Activated CD8-positive, alpha-beta T cell treated with anti-CD3 and anti-CD28 coated beads, Interleukin-2, amount 10 ng/mL, durations not matched to agents 7 days and 5 days (primary cell): ENCODE measurements at regions of chr1 and their contacts with region 1.

Region 1: DNA sequence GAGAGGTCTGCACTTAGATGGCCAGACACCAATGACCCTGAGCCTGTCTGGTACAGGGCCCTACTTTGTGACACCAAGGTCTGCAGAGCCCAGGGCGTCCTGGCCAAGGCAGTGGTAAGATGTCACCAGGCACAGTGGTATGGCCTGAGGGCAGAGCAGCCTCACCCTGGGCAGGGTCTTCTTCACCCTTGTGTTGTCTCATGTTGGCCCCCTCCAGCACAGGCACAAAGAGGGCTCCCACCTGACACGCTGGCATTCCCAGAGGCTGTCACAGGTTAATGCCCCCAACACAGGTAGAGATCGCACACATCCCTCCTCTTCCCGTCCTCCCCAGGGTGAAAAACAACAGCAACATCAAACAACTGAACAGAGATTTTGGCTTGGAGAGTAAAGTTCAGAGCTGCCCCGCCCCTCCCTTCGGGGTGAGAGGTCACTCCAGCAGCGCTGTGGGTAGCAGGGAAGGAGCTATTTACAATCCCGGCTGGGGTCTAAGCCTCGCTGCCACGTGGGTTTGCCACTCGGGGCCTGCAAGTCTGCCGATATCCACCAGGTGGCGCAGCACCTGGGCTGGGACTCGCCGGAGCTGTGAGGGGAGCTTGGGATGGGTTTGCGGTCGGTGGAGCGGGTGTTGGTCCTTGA is 12.6 kb downstream of the EFNA3 start:
- DNase-seq: peak; percentile 85
- ATAC-seq: peak; percentile 84
- H3K4me3 Mint-ChIP-seq: no peak overlapping the region
- H3K27ac Mint-ChIP-seq: no peak overlapping the region
- H3K4me1 Mint-ChIP-seq: peaks cover 9% of the 10 kb centered on the region
- H3K27me3 Mint-ChIP-seq: peaks cover 16% of the 10 kb centered on the region

Region 2: DNA sequence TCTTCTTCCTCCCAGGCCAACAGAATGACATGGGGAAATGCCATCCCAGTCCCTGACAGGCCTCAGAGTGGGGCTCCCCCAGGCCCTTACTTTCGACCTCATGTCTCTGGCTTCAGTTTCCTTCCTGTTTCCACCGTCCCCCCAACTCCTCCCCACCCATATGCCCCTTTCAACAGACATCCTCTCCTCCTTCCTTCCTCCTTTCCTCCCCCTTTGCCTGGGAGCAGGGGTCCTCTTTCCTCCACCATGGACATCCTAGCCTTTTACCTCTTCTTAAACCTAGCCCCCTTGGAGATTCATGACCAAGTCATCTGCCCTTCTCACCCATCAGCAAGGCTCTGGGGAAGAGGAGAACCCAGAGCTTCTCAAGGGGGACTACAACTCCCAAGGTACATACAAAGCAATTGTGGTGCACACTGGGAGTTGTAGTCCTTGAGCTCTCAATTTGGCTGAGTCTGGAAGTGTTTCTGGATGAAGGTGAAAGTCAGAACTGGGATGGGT is 84.5 kb before region 1 on chr1:
- CTCF ChIA-PET with region 1: no interaction called
- POLR2A ChIA-PET with region 1: no interaction called
- DNase-seq: peak; percentile 67
- ATAC-seq: peak; percentile 45
- H3K4me3 Mint-ChIP-seq: peak overlapping the region; percentile 63
- H3K27ac Mint-ChIP-seq: peak overlapping the region; percentile 95
- H3K4me1 Mint-ChIP-seq: peaks cover 72% of the 10 kb centered on the region
- H3K27me3 Mint-ChIP-seq: no peaks in the 10 kb centered on the region

Region 3: DNA sequence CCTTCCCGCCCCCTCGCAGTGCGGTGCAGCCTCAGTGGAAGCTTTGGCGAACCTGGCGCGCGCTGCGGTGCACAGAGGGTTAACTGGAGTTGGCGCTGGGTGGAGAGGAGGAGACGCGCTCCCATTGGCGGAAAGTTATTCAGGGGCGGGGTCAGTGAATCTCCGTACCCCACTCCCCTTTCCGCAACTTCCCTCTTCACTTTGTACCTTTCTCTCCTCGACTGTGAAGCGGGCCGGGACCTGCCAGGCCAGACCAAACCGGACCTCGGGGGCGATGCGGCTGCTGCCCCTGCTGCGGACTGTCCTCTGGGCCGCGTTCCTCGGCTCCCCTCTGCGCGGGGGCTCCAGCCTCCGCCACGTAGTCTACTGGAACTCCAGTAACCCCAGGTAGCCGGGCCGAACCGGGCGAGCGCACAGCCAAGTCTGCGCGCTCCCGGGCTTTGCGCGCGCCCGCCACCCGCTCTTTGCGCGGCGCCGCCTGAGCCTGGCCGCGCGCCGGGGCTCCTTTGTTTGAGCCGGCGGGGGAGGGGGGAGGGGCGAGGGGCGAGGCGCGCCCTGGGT is 27.6 kb before region 1 on chr1 and contains the start of gene EFNA4:
- CTCF ChIA-PET with region 1: interaction called, 201 read pairs
- POLR2A ChIA-PET with region 1: interaction called, 3 read pairs
- DNase-seq: peak; percentile 90
- ATAC-seq: peak; percentile 85
- H3K4me3 Mint-ChIP-seq: peak within 1 kb of the TSS; percentile 89
- H3K27ac Mint-ChIP-seq: peak within 1 kb of the TSS; percentile 51
- H3K4me1 Mint-ChIP-seq: peaks cover 41% of the 10 kb centered on the region
- H3K27me3 Mint-ChIP-seq: no peaks in the 10 kb centered on the region
- total RNA-seq, gene EFNA4: 7.8 to 9.7 TPM

Region 4: DNA sequence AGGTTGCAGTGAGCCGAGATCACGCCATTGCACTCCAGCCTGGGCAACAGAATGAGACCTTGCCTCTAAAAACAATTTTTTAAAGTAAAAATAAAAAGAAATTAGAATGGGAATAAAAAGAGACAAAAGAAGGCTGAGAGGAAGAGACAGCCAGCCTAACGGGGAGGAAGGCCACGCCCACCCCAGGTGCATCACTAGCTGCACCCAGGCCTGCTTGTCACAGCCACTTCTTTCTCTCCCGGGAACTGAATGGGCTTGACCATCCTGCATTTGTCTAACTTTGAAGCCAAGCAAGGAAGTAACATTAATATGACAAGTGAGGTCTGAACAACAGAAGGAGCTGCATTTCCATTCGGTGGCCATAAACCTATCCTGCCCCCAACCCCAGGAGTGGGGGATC is 15.7 kb after region 1 on chr1:
- CTCF ChIA-PET with region 1: interaction called, 19 read pairs
- POLR2A ChIA-PET with region 1: no interaction called
- DNase-seq: no peak
- ATAC-seq: no peak
- H3K4me3 Mint-ChIP-seq: no peak overlapping the region
- H3K27ac Mint-ChIP-seq: no peak overlapping the region
- H3K4me1 Mint-ChIP-seq: no peaks in the 10 kb centered on the region
- H3K27me3 Mint-ChIP-seq: peaks cover 3% of the 10 kb centered on the region

Region 5: GRCh38 chr1:155127105-155127964 is 36.1 kb after region 1 on chr1 and contains the start of gene EFNA1:
- CTCF ChIA-PET with region 1: interaction called, 14 read pairs
- POLR2A ChIA-PET with region 1: no interaction called
- DNase-seq: peak; percentile 39
- ATAC-seq: peak; percentile 85
- H3K4me3 Mint-ChIP-seq: peak within 1 kb of the TSS; percentile 68
- H3K27ac Mint-ChIP-seq: no peak within 1 kb of the TSS
- H3K4me1 Mint-ChIP-seq: peaks cover 30% of the 10 kb centered on the region
- H3K27me3 Mint-ChIP-seq: peaks cover 50% of the 10 kb centered on the region
- total RNA-seq, gene EFNA1: not detected

Region 6: DNA sequence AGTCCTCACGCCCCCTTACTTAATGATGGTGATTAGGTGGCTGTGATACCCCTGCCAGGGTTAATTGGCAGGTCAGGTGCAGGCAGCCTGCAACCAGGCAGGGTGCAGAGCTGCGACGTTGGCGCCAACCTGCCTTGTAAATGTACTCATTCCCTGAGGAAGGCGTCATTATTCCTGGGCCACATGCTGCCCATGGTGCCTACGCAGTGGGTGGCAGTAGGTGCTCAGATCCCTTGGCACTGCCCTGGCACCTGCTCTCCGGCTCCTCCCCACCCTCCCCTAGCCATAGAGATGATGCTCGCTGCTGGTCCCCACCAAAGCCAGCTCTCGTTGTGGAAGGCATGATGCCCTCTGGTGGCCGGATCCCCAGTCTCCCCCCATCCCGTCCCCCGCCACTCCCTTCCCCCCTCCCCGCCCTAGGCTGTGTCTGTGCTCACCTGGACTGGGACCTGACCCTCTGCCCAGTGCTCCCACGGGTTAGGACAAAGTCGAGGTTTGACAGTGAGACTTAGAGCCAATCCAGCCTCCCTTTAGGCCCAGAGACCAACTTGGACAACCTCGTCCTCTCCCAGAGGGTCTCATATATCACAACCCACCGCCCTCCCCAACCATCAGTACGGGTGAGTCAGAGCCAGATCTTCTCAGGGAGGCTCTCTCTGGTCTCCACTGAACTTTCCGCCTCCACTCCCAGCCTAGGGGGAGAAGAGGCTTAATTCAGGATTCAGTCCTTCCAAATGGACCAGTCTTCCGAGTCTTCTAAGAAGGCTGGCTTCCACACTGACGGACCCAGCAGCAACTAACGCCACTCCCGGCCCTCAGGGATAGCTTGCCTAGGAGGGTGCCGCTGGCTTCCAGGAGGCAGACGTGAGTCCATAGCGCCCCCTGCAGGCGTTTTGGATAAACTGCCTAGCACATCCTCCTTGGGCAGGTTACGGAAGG is 76.2 kb after region 1 on chr1:
- CTCF ChIA-PET with region 1: interaction called, 166 read pairs
- POLR2A ChIA-PET with region 1: interaction called, 4 read pairs
- DNase-seq: peak; percentile 92
- ATAC-seq: peak; percentile 80
- H3K4me3 Mint-ChIP-seq: peak overlapping the region; percentile 53
- H3K27ac Mint-ChIP-seq: no peak overlapping the region
- H3K4me1 Mint-ChIP-seq: peaks cover 25% of the 10 kb centered on the region
- H3K27me3 Mint-ChIP-seq: no peaks in the 10 kb centered on the region

Region 7: GRCh38 chr1:155553349-155553748 is 462.2 kb after region 1 on chr1:
- CTCF ChIA-PET with region 1: no interaction called
- POLR2A ChIA-PET with region 1: no interaction called
- DNase-seq: no peak
- ATAC-seq: no peak
- H3K4me3 Mint-ChIP-seq: no peak overlapping the region
- H3K27ac Mint-ChIP-seq: no peak overlapping the region
- H3K4me1 Mint-ChIP-seq: peaks cover 18% of the 10 kb centered on the region
- H3K27me3 Mint-ChIP-seq: no peaks in the 10 kb centered on the region